ENCODE measurements at regions of chr2 and their contacts with region 1.

Region 1: DNA sequence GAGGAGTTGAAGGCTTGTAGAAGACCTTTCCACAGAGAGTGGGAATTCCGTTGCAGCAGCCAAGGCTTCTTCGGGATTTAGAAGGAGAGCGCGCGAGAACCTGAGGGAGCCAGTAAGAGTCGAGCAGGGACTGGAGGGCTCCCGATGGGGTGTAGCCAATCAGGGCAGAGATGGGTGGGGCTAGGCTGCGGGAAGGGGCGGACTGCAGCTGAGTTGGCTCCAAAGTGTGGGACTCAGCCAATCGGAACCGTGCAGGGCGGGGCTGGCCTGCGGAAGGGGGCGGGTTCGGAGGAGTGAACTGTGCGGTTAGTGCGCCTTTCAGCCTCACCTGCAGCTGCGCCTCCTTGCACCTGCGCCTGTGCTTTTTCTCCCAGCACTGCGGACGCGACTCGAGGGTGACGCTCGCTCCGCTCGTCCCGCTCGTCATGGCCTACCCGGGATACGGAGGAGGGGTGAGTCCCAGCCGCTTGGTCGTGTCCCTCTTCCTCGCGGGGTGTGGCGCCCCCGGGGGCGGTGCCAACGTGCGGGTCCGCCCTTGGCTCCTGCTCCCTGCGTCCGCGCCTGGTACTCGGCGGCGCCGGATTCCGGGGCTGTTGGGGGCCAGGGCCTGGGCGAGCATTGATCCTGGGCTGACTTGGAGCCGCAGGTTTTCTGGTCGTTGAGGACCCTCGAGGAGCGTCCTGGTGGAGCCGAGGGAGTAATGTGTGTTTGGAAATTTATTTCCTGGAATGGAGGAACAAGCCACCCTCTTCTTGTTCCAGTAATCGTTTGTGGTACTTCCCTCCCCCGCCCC is at the start of gene GCA:
- DNase-seq: peak; percentile 92 to 99 (median 98)
- H3K4me3 ChIP-seq: peak within 1 kb of the TSS; percentile 85
- H3K4me3 Mint-ChIP-seq: peak within 1 kb of the TSS; percentile 84 to 97 (median 88)
- H3K27ac ChIP-seq: no peak within 1 kb of the TSS
- H3K27ac Mint-ChIP-seq: peak within 1 kb of the TSS in 7 of 8 donors; percentile 17 to 78 (median 48)
- H3K4me1 ChIP-seq: peaks cover 11% of the 10 kb centered on the region
- H3K4me1 Mint-ChIP-seq: peaks cover 14 to 19% (median 17%) of the 10 kb centered on the region in 3 donors
- H3K27me3 ChIP-seq: no peaks in the 10 kb centered on the region
- H3K27me3 Mint-ChIP-seq: peaks cover 0 to 2% of the 10 kb centered on the region in 2 donors
- total RNA-seq, gene GCA: 15.2 to 15.8 TPM

Region 2: GRCh38 chr2:162318328-162319180 is 25.5 kb before region 1 on chr2 and contains the start of gene IFIH1:
- CTCF ChIA-PET with region 1: interaction called, 4 read pairs
- POLR2A ChIA-PET with region 1: interaction called, 10 read pairs
- DNase-seq: peak; percentile 62 to 84 (median 78)
- H3K4me3 ChIP-seq: peak within 1 kb of the TSS; percentile 86
- H3K4me3 Mint-ChIP-seq: peak within 1 kb of the TSS; percentile 90 to 99 (median 95)
- H3K27ac ChIP-seq: peak within 1 kb of the TSS; percentile 95
- H3K27ac Mint-ChIP-seq: peak within 1 kb of the TSS; percentile 94 to 100 (median 100)
- H3K4me1 ChIP-seq: peaks cover 48% of the 10 kb centered on the region
- H3K4me1 Mint-ChIP-seq: peaks cover 63 to 72% (median 71%) of the 10 kb centered on the region in 3 donors
- H3K27me3 ChIP-seq: no peaks in the 10 kb centered on the region
- H3K27me3 Mint-ChIP-seq: no peaks in the 10 kb centered on the region
- total RNA-seq, gene IFIH1: 16.8 to 17.9 TPM